T-cell (primary cell): ENCODE measurements at regions of chr12 and their contacts with region 1.

Region 1: GRCh38 chr12:53907103-53907502 is 31.5 kb upstream of the HOXC13 start:
- DNase-seq: no peak
- ATAC-seq: no peak
- H3K4me3 ChIP-seq: no peak overlapping the region
- H3K4me3 Mint-ChIP-seq: no peak overlapping the region
- H3K27ac ChIP-seq: no peak overlapping the region
- H3K27ac Mint-ChIP-seq: no peak overlapping the region
- H3K4me1 ChIP-seq: no peaks in the 10 kb centered on the region
- H3K4me1 Mint-ChIP-seq: no peaks in the 10 kb centered on the region
- H3K27me3 ChIP-seq: peaks cover 4% of the 10 kb centered on the region in 2 experiments
- H3K27me3 Mint-ChIP-seq: peaks cover 33 to 38% of the 10 kb centered on the region in 2 donors

Region 2: GRCh38 chr12:53887881-53888280 is 19.2 kb before region 1 on chr12:
- CTCF ChIA-PET with region 1: no interaction called
- POLR2A ChIA-PET with region 1: interaction called, 4 to 10 read pairs
- DNase-seq: no peak
- ATAC-seq: no peak
- H3K4me3 ChIP-seq: no peak overlapping the region
- H3K4me3 Mint-ChIP-seq: no peak overlapping the region
- H3K27ac ChIP-seq: no peak overlapping the region
- H3K27ac Mint-ChIP-seq: no peak overlapping the region
- H3K4me1 ChIP-seq: no peaks in the 10 kb centered on the region
- H3K4me1 Mint-ChIP-seq: no peaks in the 10 kb centered on the region
- H3K27me3 ChIP-seq: peaks cover 9 to 11% of the 10 kb centered on the region in 2 experiments
- H3K27me3 Mint-ChIP-seq: peaks cover 50 to 59% of the 10 kb centered on the region in 2 donors